Posterior vena cava (tissue), 2 donors: ENCODE measurements at regions of chr11 and their contacts with region 1.

Region 1: DNA sequence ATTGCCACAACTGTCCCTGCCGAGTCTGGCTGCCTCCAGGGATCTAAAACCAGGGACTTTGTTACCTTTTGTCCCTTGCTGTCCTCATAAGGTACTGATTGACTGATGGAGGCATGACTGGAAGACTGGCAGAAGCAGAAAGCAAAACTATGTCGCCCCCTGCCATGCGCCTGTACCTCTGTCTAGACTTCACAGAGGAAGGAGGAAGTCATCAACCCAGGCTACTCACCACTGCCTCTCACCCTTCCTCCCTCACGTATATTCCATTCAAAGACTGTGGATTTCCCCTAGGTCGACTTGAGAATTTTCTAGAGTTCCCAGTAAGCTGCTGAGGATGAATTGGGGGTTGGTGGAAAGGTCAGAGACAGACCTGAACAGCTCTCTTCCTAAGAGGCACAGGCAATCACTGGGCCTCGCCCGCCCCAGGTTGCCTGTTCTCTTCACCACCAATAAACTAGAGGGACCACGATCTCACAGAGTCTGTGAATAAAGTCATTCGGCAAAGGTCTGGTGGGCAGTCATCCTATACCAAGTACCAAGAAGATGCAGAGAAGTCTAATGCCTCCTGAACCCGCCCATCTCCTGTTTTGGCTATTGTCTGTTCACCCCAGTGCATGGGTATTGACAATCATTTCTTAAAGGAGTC is 27.5 kb upstream of the CHST1 start:
- DNase-seq: no peak

Region 2: DNA sequence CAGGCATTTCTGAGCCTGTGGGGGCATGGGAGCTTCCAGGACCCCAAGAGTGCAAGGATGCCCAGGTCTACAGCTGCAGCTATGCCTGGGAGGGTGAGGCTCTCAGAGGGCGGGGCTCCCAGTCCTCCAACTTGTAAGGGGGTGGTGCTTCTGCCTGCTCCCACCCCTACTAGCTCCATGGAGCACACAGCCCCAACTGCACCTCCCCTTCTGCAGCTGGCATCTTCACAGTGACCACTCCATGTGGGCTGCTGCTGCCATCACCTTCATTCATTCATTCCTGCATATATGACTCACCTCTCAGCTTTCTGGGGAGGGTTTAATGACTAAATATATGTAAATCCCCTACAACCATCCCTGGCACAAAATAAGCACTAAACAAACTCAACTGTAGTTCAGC is 71.3 kb before region 1 on chr11:
- intact Hi-C with region 1: loop called in 1 of 2 experiments (anchors 5 kb)
- DNase-seq: no peak

Region 3: GRCh38 chr11:45655347-45655756 is 37.6 kb before region 1 on chr11:
- intact Hi-C with region 1: loop called in 1 of 2 experiments (anchors 1 kb)
- DNase-seq: peak; percentile 92